ENCODE measurements at regions of chr12 and their contacts with region 1.

Region 1: DNA sequence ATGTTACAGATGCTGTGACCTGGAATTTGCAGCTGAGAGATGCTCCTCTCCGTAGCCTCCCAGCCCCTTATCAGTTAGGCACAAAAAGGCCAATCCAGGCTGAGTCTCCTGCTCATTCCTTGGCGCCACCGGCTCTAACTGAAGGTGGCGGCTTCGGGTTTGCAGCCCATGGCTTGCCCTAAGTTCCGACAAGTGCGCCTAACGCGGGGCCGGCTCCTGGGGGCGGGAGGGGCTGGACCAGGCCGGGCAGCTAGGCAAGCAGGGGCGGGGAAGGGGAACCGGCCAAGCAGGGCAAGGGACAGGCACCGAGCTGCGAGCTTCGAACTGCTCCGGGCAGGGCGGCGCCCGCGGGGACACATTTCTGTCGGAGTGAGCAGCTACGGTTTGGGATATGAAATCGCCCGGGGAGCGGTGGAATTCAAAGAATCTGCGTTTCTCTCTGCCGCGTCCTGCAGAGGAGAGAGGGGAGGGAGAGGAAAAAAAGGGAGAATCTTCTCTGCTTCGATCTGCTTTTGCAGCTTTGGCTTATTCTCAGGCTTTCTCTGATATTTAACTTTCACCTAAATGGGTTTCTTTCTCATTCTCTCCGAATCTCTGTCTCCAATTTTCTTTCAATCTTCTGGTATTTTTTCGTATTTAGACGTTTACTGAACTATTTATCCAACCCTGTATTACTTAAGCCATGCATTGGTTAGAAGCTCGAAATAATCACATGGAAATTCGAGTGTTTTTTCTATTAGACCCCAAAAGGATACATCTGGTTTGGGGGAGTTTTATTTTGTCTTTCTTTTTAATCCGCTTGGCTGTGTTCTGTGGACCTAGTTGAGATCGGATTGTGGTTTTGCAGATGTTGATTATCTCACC is 1.6 kb upstream of the HOXC12 start:
- DNase-seq: no peak
- H3K4me3 ChIP-seq: no peak overlapping the region
- H3K4me3 Mint-ChIP-seq: peak overlapping the region in 4 of 8 donors; percentile 28 to 58 (median 48)
- H3K27ac ChIP-seq: no peak overlapping the region
- H3K27ac Mint-ChIP-seq: peak overlapping the region in 4 of 7 donors; percentile 12 to 90 (median 79)
- H3K4me1 ChIP-seq: peaks cover 25% of the 10 kb centered on the region
- H3K4me1 Mint-ChIP-seq: peaks cover 6 to 62% (median 26%) of the 10 kb centered on the region in 4 donors
- H3K27me3 ChIP-seq: peaks cover 89% of the 10 kb centered on the region
- H3K27me3 Mint-ChIP-seq: peaks cover 71 to 82% of the 10 kb centered on the region in 2 donors

Region 2: DNA sequence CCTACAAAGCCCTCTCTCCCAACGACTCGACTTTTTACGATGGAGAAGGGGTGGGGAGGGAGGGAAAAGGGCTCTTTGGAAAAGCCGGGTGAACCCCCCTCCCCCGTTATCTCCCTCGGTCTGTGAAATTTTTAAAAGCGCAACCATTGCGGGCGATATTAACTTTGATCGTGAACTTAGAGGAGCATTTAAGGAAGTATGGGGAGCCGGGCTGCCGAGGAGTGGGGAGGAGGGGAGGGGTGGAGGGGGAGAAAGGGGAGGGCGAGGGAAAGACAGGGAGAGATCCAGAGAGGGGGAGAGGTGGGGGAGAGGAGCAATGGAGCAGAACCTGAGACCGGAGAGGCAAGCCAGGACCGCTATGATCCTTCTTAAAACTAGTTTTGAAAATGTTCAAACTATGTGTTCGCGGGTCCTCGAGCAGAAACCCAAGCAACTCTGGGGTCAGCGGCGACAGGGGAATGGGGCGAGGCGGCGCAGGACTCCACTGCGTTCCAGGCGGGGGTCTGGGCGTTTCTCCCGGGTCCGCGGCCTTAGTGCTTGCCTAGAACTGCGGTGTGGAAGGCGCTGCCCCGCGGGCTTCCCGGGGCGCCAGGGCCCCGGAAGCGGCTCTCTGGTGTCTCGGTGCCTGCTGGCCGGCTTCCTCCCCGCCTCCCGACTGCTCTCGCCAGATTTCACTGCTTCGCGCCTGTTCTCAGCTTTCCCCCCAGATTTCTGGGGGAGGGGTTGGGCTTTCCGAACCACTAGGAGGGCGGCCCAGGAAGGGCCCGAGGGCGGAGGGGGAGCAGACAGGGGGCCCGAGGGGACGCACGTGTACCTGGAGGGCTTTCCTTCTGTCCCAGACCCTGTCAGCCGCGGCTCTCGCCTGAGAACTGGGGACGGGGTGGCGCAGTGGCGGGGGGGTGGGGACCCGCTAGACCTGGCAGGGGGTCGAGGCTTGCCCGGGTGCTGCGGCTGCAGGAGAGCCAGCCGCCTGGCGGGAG is 21.3 kb after region 1 on chr12 and contains the start of gene HOTAIR:
- CTCF ChIA-PET with region 1: no interaction called
- POLR2A ChIA-PET with region 1: no interaction called
- intact Hi-C with region 1: loop called (anchors 2 kb)
- DNase-seq: no peak
- H3K4me3 ChIP-seq: peak within 1 kb of the TSS in 1 of 2 donors; percentile 40
- H3K4me3 Mint-ChIP-seq: peak within 1 kb of the TSS; percentile 67 to 85 (median 77)
- H3K27ac ChIP-seq: no peak within 1 kb of the TSS
- H3K27ac Mint-ChIP-seq: peak within 1 kb of the TSS in 4 of 7 donors; percentile 57 to 82 (median 76)
- H3K4me1 ChIP-seq: peaks cover 30% of the 10 kb centered on the region
- H3K4me1 Mint-ChIP-seq: peaks cover 4 to 36% (median 18%) of the 10 kb centered on the region in 4 donors
- H3K27me3 ChIP-seq: peaks cover 91% of the 10 kb centered on the region
- H3K27me3 Mint-ChIP-seq: peaks cover 69 to 79% of the 10 kb centered on the region in 2 donors
- total RNA-seq, gene HOTAIR: not detected

Region 3: DNA sequence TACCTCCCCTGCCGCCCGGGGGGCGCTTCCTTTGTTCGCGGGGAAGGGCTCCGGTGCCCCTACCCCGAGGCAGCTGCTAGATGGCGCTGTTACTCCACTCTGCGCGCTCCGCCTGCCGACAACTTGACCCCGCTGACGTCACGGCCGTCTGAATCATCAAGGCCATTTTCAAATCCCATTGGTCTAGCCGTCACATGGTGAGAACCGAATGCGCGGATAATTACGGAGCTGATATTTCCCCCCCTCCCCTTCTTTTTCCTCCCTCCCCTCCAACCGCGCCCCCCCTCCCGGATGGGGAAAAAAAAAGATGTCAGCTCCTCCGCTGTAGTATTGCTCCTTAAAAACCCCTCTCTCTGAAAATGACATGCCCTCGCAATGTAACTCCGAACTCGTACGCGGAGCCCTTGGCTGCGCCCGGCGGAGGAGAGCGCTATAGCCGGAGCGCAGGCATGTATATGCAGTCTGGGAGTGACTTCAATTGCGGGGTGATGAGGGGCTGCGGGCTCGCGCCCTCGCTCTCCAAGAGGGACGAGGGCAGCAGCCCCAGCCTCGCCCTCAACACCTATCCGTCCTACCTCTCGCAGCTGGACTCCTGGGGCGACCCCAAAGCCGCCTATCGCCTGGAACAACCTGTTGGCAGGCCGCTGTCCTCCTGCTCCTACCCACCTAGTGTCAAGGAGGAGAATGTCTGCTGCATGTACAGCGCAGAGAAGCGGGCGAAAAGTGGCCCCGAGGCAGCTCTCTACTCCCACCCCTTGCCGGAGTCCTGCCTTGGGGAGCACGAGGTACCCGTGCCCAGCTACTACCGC is 32.0 kb after region 1 on chr12 and contains the start of gene HOXC10:
- CTCF ChIA-PET with region 1: no interaction called
- POLR2A ChIA-PET with region 1: no interaction called
- intact Hi-C with region 1: loop called (anchors 5 kb)
- DNase-seq: peak in 4 of 5 donors; percentile 42 to 73 (median 45)
- H3K4me3 ChIP-seq: no peak within 1 kb of the TSS
- H3K4me3 Mint-ChIP-seq: peak within 1 kb of the TSS; percentile 48 to 88 (median 70)
- H3K27ac ChIP-seq: no peak within 1 kb of the TSS
- H3K27ac Mint-ChIP-seq: peak within 1 kb of the TSS in 5 of 7 donors; percentile 42 to 93 (median 75)
- H3K4me1 ChIP-seq: peaks cover 36% of the 10 kb centered on the region
- H3K4me1 Mint-ChIP-seq: peaks cover 15 to 57% (median 29%) of the 10 kb centered on the region in 4 donors
- H3K27me3 ChIP-seq: peaks cover 94% of the 10 kb centered on the region
- H3K27me3 Mint-ChIP-seq: peaks cover 76 to 82% of the 10 kb centered on the region in 2 donors
- total RNA-seq, gene HOXC10: not detected